Activated T-helper 2 cell treated with anti-CD3 and anti-CD28 coated beads, Interferon-gamma antibody, Interleukin-2, Interleukin-4, amounts not matched to agents 10 μg/mL and 5 μg/mL and 100 μg/mL, durations not matched to agents 14 hours and 24 hours and 36 hours (primary cell): ENCODE measurements at regions of chr1 and their contacts with region 1.

Region 1: DNA sequence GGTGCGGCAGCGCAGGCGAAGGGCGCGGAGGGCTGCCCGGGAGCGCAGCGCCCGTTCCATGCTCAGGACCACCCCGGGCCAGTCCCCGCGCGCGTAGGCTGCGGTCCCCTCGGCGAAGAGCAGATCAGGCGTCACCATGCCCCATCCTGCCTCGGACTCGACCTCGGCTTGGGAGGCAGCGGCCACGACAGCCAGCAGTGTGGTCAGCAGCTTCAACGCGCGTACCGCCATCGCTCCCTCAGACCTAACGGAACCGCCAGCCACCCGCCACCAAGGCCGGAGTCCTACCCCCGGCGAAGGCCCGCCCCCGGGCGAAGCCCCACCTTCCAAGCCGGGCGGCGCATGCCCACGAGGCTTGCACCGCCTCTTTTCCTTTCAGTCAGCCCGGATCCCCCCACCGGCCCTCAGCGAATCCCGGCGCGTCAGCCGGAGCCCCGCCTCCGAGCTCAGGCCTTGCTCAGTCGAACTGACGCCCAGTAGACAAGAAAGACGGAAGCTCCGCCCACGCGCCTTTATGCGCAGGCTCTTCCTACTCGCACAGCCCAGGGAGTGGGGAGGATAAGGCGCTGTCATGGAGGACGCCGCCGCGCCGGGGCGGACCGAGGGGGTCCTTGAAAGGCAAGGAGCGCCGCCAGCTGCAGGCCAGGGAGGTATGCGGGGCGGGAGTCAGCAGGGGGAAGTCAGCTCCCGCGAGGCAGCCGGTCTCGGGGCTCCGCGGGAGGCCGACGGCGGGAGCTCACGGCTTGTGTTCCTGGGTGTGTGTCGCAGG is at the starts of genes C1orf50 and P3H1:
- DNase-seq: peak; percentile 100
- H3K4me3 Mint-ChIP-seq: no peak within 1 kb of the TSS
- H3K27ac Mint-ChIP-seq: peak within 1 kb of the TSS; percentile 88
- H3K4me1 Mint-ChIP-seq: peaks cover 17% of the 10 kb centered on the region
- H3K27me3 Mint-ChIP-seq: no peaks in the 10 kb centered on the region
- total RNA-seq, gene C1orf50: 6.9 and 10.3 TPM in 2 replicates
- total RNA-seq, gene P3H1: 47.9 and 56.7 TPM in 2 replicates

Region 2: DNA sequence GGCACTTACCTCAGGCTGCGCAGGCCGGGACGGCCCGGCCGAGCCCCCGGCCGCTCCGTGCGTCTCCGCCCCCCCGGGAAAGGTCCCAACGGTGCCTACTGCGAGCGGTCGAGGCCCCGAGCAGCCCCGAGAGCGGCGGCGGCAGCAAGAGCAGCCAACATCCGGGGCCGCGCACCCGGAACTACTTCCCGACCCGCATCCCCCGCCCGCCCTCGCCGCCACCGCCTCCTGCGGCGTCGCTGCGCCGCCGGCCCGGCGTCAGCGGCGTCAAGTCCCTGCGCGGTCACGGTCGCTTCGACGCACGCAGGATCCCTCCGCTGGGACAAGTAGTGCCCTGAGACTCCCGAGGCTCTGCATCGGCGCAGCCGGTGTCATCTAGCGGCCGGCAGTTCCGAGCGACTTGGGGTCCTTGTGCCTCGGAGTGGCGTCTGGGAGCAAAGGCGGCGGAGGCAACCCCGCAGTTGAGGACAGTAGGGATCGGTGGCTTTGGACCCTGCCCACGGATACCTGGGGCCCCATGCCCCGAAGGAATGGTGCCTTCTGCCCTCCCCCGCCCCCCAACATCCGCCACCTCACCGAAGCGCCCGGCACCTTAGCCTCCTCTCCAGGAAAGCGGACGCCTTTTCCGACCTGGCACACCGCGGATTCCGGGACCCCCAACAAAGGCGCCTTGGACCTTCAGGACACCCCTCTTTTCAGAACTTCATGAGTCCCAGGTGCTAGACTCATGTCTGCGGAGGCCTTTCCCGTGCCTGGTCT is 431.7 kb before region 1 on chr1 and contains the start of gene FOXJ3:
- intact Hi-C with region 1: loop called (anchors 10 kb)
- DNase-seq: peak; percentile 87
- H3K4me3 Mint-ChIP-seq: peak within 1 kb of the TSS; percentile 90
- H3K27ac Mint-ChIP-seq: peak within 1 kb of the TSS; percentile 84
- H3K4me1 Mint-ChIP-seq: peaks cover 37% of the 10 kb centered on the region
- H3K27me3 Mint-ChIP-seq: no peaks in the 10 kb centered on the region
- total RNA-seq, gene FOXJ3: 43.1 and 46.4 TPM in 2 replicates

Region 3: DNA sequence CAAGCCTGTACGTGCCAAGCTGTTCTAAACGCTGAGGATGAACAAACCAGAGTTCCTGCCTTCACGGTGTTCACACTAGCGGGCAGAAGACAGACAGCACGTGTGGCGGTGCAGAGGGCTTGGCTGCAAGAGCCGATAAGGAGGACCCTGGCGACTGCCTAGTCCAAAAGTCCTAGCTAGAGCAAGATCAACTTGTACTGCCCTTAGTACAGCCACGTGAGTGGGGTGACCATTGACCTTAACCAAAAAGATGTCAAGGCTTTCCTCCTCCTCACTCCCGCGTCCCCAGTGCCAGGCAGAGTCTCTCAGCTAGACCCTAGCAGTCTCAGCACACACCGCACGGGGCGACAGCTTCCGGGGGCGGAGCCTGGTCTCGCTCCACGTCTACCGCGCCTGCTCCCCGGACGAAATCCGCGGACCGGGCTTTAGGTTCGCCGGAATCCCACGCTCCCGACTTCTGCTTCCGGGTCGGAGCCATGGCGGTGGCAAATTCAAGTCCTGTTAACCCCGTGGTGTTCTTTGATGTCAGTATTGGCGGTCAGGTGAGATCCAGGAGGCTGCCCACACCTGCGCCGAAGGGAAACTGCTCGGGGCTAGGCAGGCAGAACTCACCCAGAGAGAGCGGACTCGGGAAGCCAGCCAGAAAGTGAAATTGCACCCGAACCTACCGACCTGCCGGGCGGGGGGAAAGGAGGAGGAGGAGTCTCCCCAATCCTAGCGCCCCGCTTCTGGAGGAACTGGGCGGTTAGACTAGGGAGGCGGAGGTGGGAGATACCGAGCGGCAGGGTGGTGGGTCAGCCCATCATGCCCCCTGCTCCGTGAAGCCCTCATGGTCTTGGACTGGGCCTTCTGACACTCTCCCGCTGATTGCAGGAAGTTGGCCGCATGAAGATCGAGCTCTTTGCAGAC is 108.7 kb before region 1 on chr1 and contains the start of gene PPIH:
- intact Hi-C with region 1: loop called (anchors 2 kb)
- DNase-seq: peak; percentile 93
- H3K4me3 Mint-ChIP-seq: peak within 1 kb of the TSS; percentile 99
- H3K27ac Mint-ChIP-seq: peak within 1 kb of the TSS; percentile 97
- H3K4me1 Mint-ChIP-seq: peaks cover 37% of the 10 kb centered on the region
- H3K27me3 Mint-ChIP-seq: peaks cover 4% of the 10 kb centered on the region
- total RNA-seq, gene PPIH: 77.5 and 78.7 TPM in 2 replicates

Region 4: GRCh38 chr1:42690477-42691156 is 76.3 kb before region 1 on chr1:
- intact Hi-C with region 1: no loop called
- DNase-seq: no peak
- H3K4me3 Mint-ChIP-seq: no peak overlapping the region
- H3K27ac Mint-ChIP-seq: peak overlapping the region; percentile 38
- H3K4me1 Mint-ChIP-seq: peaks cover 70% of the 10 kb centered on the region
- H3K27me3 Mint-ChIP-seq: no peaks in the 10 kb centered on the region

Region 5: GRCh38 chr1:42816585-42817434 is 49.9 kb after region 1 on chr1 and contains the starts of genes ERMAP and SVBP:
- intact Hi-C with region 1: loop called (anchors 2 kb)
- DNase-seq: peak; percentile 89
- H3K4me3 Mint-ChIP-seq: peak within 1 kb of the TSS; percentile 85
- H3K27ac Mint-ChIP-seq: peak within 1 kb of the TSS; percentile 84
- H3K4me1 Mint-ChIP-seq: peaks cover 22% of the 10 kb centered on the region
- H3K27me3 Mint-ChIP-seq: no peaks in the 10 kb centered on the region
- total RNA-seq, gene ERMAP: 3.1 and 4.8 TPM in 2 replicates
- total RNA-seq, gene SVBP: 11.4 and 12.3 TPM in 2 replicates

Region 6: GRCh38 chr1:42958488-42959319 is 191.8 kb after region 1 on chr1 and contains the start of gene SLC2A1:
- intact Hi-C with region 1: loop called (anchors 1 kb)
- DNase-seq: peak; percentile 91
- H3K4me3 Mint-ChIP-seq: peak within 1 kb of the TSS; percentile 97
- H3K27ac Mint-ChIP-seq: peak within 1 kb of the TSS; percentile 100
- H3K4me1 Mint-ChIP-seq: peaks cover 52% of the 10 kb centered on the region
- H3K27me3 Mint-ChIP-seq: peaks cover 2% of the 10 kb centered on the region
- total RNA-seq, gene SLC2A1: 143 and 155 TPM in 2 replicates

Region 7: GRCh38 chr1:43293896-43294760 is 527.2 kb after region 1 on chr1:
- intact Hi-C with region 1: no loop called
- DNase-seq: no peak
- H3K4me3 Mint-ChIP-seq: no peak overlapping the region
- H3K27ac Mint-ChIP-seq: peak overlapping the region; percentile 53
- H3K4me1 Mint-ChIP-seq: peaks cover 22% of the 10 kb centered on the region
- H3K27me3 Mint-ChIP-seq: no peaks in the 10 kb centered on the region